Dendritic cell treated with granulocyte-macrophage colony-stimulating factor and Interleukin-4, amounts not matched to agents 40 ng/mL and 50 ng/mL, for 4 days (primary cell): ENCODE measurements at regions of chr15 and their contacts with region 1.

Region 1: GRCh38 chr15:63288778-63289378 is 11.5 kb downstream of the APH1B start:
- H3K4me3 Mint-ChIP-seq: no peak overlapping the region
- H3K27ac Mint-ChIP-seq: no peak overlapping the region
- H3K4me1 Mint-ChIP-seq: peaks cover 22% of the 10 kb centered on the region
- H3K27me3 Mint-ChIP-seq: no peaks in the 10 kb centered on the region

Region 2: GRCh38 chr15:63348392-63348791 is 59.5 kb after region 1 on chr15:
- intact Hi-C with region 1: no loop called
- H3K4me3 Mint-ChIP-seq: no peak overlapping the region
- H3K27ac Mint-ChIP-seq: peak overlapping the region; percentile 76
- H3K4me1 Mint-ChIP-seq: peaks cover 15% of the 10 kb centered on the region
- H3K27me3 Mint-ChIP-seq: peaks cover 6% of the 10 kb centered on the region

Region 3: DNA sequence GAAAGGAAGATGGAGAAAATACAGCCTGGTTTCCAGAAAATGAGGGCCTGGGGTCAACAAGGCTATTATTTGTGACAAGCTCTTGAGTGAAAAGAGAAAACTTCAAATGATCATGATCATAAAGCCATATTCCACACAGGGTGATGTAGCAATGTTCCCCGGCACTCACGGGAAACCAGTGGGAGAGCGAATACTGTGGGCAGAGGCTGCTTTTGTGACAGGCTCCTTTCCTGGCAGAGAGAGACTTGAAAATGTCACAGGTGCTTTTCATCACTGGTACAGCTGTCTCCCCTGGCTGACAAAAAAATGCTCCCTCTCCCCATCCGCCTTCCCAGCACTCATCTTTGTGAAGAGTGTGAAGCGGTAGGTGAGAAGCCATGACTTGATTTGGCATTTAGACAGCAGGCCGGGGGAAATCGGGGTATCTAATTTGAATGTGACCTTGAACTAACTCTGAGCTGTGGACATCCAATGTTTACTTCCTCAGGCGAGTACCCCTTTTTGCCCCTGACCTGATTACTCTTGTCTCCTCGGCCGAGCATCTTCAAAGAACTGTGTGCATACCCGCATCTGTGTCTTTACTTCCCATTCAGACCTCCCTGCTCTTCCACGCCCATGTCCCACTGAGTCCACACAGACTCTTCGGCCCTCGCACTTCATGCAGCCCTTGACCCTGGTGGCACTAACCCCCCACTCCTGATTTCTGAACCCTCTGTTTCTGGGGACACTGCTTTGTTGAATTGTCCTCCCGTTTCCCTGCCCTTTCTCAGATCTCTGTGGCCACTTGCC is 69.6 kb after region 1 on chr15:
- intact Hi-C with region 1: no loop called
- H3K4me3 Mint-ChIP-seq: no peak overlapping the region
- H3K27ac Mint-ChIP-seq: no peak overlapping the region
- H3K4me1 Mint-ChIP-seq: peaks cover 13% of the 10 kb centered on the region
- H3K27me3 Mint-ChIP-seq: peaks cover 12% of the 10 kb centered on the region

Region 4: DNA sequence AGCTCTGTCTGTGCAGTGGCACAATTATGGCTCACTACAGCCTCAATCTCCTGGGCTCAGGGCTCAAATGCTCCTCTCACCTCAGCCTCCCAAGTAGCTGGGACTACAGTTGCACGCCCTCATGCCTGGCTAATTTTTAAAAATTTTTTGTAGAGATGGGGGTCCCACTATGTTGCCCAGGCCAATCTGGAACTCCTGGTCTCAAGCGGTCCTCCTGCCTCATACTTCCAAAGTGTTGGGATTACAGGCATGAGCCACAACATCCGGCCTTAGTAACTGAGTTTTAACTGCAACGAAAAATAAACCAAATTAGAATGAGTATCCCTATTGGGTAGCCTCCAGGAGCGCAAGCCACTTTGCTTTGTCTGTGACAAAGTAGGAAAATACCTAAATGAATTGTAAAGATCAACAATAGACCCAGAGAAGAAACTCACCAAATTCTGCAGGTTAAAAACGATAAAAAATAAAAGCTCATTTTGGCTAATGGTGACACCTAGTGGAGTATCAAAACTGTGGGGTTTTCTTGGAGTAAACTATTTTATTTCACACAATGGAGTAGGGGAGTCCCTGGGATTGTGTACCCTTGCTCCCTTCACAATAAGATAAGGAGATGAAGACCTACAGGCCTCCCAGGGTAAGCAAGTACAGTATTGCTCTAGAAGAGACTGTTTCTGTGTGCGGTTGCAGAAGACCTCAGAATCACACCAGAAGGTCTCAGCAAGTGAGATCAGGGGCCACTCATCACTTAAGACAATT is 113.8 kb after region 1 on chr15:
- intact Hi-C with region 1: loop called (anchors 2 kb)
- H3K4me3 Mint-ChIP-seq: no peak overlapping the region
- H3K27ac Mint-ChIP-seq: no peak overlapping the region
- H3K4me1 Mint-ChIP-seq: peaks cover 29% of the 10 kb centered on the region
- H3K27me3 Mint-ChIP-seq: no peaks in the 10 kb centered on the region

Region 5: GRCh38 chr15:63466378-63467192 is 177.7 kb after region 1 on chr15:
- intact Hi-C with region 1: loop called (anchors 10 kb)
- H3K4me3 Mint-ChIP-seq: no peak overlapping the region
- H3K27ac Mint-ChIP-seq: peak overlapping the region; percentile 47
- H3K4me1 Mint-ChIP-seq: peaks cover 16% of the 10 kb centered on the region
- H3K27me3 Mint-ChIP-seq: no peaks in the 10 kb centered on the region

Region 6: DNA sequence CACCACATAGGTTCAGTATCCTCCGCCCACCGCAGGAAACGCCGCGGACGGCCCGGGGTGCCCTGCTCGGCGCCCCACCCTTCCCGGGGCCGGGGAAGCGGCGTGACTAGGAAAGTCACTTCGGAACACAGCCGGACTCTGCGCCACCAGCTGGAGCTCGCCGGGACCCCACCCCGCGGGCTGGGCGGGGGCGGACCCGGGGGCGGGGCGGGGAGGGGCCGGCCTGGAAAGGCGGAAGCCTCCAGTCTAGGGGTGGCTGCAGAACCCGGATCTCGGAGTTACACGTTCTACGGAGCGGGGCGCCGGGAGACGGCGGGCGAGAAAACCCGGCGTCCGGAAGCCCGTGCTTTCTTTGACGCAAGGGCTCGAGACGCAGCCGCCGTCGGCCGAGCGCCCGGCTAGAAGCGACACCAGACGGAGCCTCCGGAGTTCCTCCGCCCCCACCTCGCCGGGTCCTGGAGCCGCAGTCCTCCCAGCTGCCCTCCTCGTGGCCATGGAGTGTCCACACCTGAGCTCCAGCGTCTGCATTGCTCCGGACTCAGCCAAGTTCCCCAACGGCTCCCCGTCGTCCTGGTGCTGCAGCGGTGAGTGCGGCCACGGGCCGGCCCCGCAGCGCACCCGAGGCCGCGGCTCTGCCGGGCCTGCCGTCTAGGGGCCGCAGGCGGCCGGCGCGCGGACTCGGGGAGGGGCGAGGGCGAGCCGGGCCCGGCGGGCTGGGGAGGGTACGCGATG is 215.5 kb after region 1 on chr15 and contains the start of gene USP3:
- intact Hi-C with region 1: loop called (anchors 10 kb)
- H3K4me3 Mint-ChIP-seq: peak within 1 kb of the TSS; percentile 88
- H3K27ac Mint-ChIP-seq: no peak within 1 kb of the TSS
- H3K4me1 Mint-ChIP-seq: peaks cover 65% of the 10 kb centered on the region
- H3K27me3 Mint-ChIP-seq: no peaks in the 10 kb centered on the region

Region 7: DNA sequence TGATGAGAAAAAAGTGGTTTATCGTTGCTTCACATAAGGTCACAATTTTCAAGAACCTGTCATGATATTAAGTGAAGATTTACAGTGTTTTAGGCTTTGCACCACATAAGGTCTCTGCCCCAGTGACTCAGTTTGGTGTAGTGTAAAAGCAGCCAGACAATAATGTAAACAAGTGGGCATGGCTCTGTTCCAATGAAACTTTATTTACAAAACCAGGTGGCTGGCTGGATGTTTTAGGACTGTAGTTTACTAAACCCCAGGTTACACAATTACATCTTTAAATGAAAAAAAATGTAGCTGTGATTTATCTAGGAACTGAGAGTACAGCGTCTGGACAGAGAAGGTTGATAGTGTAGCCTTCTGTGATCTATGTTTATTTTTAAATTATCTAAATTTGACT is 298.6 kb after region 1 on chr15:
- intact Hi-C with region 1: loop called (anchors 5 kb)
- H3K4me3 Mint-ChIP-seq: no peak overlapping the region
- H3K27ac Mint-ChIP-seq: no peak overlapping the region
- H3K4me1 Mint-ChIP-seq: no peaks in the 10 kb centered on the region
- H3K27me3 Mint-ChIP-seq: no peaks in the 10 kb centered on the region

Region 8: DNA sequence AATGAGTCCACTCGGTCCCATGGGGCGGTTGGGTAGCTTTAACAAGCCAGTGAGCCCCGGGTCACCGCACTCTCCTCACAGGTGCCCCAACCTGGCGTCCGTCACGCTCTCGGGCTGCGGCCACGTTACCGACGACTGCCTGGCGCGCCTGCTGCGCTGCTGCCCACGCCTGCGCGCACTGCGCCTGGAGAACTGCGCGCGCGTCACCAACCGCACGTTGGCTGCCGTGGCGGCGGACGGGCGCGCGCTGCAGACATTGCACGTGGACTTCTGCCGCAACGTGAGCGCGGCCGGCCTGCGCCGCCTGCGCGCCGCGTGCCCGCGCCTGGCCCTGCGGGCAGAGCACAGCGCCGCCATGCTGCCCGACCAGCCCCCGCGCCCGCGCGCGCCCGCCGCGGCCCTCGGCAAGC is 311.7 kb after region 1 on chr15:
- intact Hi-C with region 1: loop called (anchors 5 kb)
- H3K4me3 Mint-ChIP-seq: peak overlapping the region; percentile 83
- H3K27ac Mint-ChIP-seq: peak overlapping the region; percentile 92
- H3K4me1 Mint-ChIP-seq: peaks cover 68% of the 10 kb centered on the region
- H3K27me3 Mint-ChIP-seq: no peaks in the 10 kb centered on the region